Heart right ventricle (tissue), 16 donors: ENCODE measurements at regions of chr10 and their contacts with region 1.

Region 1: GRCh38 chr10:70549962-70550458 is 52.5 kb downstream of the PRF1 start:
- DNase-seq: peak; percentile 62 to 67
- ATAC-seq: peak; percentile 58 to 78 (median 70)
- H3K4me3 ChIP-seq: no peak overlapping the region
- H3K27ac ChIP-seq: no peak overlapping the region
- H3K4me1 ChIP-seq: peaks cover 0 to 24% (median 0%) of the 10 kb centered on the region in 9 donors
- H3K27me3 ChIP-seq: no peaks in the 10 kb centered on the region
- CTCF ChIP-seq: peak; percentile 85 to 97 (median 90)

Region 2: GRCh38 chr10:70227548-70228320 is 322.3 kb before region 1 on chr10:
- intact Hi-C with region 1: loop called in 1 of 10 experiments (anchors 10 kb)
- DNase-seq: no peak
- ATAC-seq: peak in 4 of 8 donors; percentile 29 to 56 (median 42)
- H3K4me3 ChIP-seq: no peak overlapping the region
- H3K27ac ChIP-seq: peak overlapping the region in 4 of 10 donors; percentile 10 to 37 (median 20)
- H3K4me1 ChIP-seq: peaks cover 0 to 53% (median 32%) of the 10 kb centered on the region in 9 donors
- H3K27me3 ChIP-seq: no peaks in the 10 kb centered on the region
- CTCF ChIP-seq: no peak

Region 3: DNA sequence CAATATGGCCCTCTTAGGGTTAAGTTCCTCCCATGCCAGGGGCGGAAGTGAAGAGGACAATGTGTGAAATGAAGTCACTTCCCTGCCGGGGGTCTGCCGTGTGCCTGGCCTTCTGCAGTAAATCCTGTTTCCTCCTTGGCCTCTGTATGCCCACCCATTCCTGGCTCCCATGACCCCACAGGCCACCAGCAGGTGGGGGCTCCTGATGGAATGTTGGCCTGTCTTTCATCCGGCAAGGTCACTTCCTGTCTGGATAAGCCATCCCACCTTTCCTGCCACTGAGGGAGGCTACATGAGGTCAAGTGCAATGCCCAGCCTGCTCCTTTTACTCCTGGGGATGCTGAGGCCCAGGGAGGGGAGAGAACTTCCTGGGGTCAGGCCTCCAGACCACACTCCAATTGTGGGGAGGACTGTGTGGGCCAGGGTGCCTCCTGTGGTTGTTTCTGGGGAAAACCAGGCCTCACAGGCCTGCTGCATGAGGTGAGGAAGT is 49.2 kb before region 1 on chr10:
- intact Hi-C with region 1: no loop called
- DNase-seq: peak; percentile 40 to 79
- ATAC-seq: peak; percentile 79 to 92 (median 90)
- H3K4me3 ChIP-seq: peak overlapping the region in 1 of 10 donors; percentile 7
- H3K27ac ChIP-seq: peak overlapping the region; percentile 6 to 82 (median 64)
- H3K4me1 ChIP-seq: peaks cover 3 to 64% (median 34%) of the 10 kb centered on the region in 9 donors
- H3K27me3 ChIP-seq: no peaks in the 10 kb centered on the region
- CTCF ChIP-seq: no peak

Region 4: DNA sequence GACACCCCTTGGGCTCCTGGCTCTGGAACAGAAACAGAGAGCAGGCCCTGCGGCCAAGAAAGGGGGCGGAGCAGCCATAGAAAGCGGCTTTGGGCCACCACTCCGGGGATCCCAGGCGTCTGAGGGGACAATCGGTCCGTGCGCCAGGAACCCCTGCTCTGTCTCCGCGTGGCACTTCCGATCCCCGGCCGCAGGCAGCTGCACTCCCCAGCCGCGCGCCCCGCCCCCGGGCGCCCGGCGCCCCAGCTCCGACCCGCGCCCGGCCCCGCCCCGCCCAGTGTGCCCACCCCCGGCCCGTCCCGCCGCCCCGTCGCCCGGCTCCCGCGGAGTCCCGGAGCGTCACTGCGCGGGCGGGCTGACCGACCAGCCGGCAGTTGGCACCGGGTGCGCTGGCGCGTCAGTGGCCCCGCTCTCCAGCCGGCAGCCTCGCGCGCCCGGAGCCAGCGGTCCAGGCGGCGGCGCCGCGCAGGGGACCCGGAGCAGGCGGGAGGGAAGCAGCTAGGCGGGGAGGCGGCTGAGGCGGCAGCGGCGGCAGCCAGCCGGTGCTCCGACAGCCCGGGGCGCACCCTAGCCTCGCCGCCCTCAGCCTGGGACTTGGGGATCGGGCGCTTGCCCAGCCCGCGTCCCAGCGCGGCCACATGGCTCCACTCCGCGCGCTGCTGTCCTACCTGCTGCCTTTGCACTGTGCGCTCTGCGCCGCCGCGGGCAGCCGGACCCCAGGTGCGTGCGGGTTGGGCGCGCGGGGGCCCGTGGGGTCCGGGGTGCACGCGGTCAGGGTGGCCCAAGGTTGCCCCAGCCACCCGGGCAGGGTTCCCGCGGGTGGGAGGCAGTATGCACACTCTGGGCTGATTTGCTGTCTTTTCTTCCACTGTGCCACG is 122.4 kb after region 1 on chr10 and contains the start of gene ADAMTS14:
- intact Hi-C with region 1: loop called in 5 of 10 experiments (anchors 5 to 10 kb)
- DNase-seq: peak in 1 of 2 donors; percentile 50
- ATAC-seq: peak in 7 of 8 donors; percentile 17 to 60 (median 53)
- H3K4me3 ChIP-seq: peak within 1 kb of the TSS; percentile 6 to 56 (median 50)
- H3K27ac ChIP-seq: peak within 1 kb of the TSS in 4 of 10 donors; percentile 62 to 79 (median 70)
- H3K4me1 ChIP-seq: peaks cover 0 to 40% (median 26%) of the 10 kb centered on the region in 9 donors
- H3K27me3 ChIP-seq: peaks cover 0 to 31% (median 3%) of the 10 kb centered on the region in 7 donors
- CTCF ChIP-seq: no peak
- total RNA-seq, gene ADAMTS14: 0.08 to 1.4 (median 0.59) TPM